Common myeloid progenitor, CD34-positive (primary cell): ENCODE measurements at regions of chr9 and their contacts with region 1.

Region 1: GRCh38 chr9:92438900-92439526 is 14.7 kb upstream of the OMD start:
- DNase-seq: peak; percentile 25 to 60 (median 51)
- H3K4me3 ChIP-seq: no peak overlapping the region
- H3K27ac ChIP-seq: no peak overlapping the region
- H3K4me1 ChIP-seq: no peaks in the 10 kb centered on the region
- H3K27me3 ChIP-seq: no peaks in the 10 kb centered on the region

Region 2: GRCh38 chr9:92119586-92119985 is 319.4 kb before region 1 on chr9:
- CTCF ChIA-PET with region 1: no interaction called
- POLR2A ChIA-PET with region 1: interaction called, 18 read pairs
- DNase-seq: no peak
- H3K4me3 ChIP-seq: peak overlapping the region in 1 of 7 experiments; percentile 27
- H3K27ac ChIP-seq: no peak overlapping the region
- H3K4me1 ChIP-seq: peaks cover 2 to 5% (median 4%) of the 10 kb centered on the region in 4 experiments
- H3K27me3 ChIP-seq: no peaks in the 10 kb centered on the region

Region 3: GRCh38 chr9:92265159-92265558 is 173.9 kb before region 1 on chr9:
- CTCF ChIA-PET with region 1: no interaction called
- POLR2A ChIA-PET with region 1: no interaction called
- DNase-seq: no peak
- H3K4me3 ChIP-seq: no peak overlapping the region
- H3K27ac ChIP-seq: no peak overlapping the region
- H3K4me1 ChIP-seq: no peaks in the 10 kb centered on the region
- H3K27me3 ChIP-seq: no peaks in the 10 kb centered on the region

Region 4: GRCh38 chr9:92328225-92328624 is 110.8 kb before region 1 on chr9:
- CTCF ChIA-PET with region 1: interaction called, 12 read pairs
- POLR2A ChIA-PET with region 1: no interaction called
- DNase-seq: peak; percentile 52 to 71 (median 68)
- H3K4me3 ChIP-seq: no peak overlapping the region
- H3K27ac ChIP-seq: no peak overlapping the region
- H3K4me1 ChIP-seq: peaks cover 14 to 32% (median 24%) of the 10 kb centered on the region in 4 experiments
- H3K27me3 ChIP-seq: no peaks in the 10 kb centered on the region

Region 5: DNA sequence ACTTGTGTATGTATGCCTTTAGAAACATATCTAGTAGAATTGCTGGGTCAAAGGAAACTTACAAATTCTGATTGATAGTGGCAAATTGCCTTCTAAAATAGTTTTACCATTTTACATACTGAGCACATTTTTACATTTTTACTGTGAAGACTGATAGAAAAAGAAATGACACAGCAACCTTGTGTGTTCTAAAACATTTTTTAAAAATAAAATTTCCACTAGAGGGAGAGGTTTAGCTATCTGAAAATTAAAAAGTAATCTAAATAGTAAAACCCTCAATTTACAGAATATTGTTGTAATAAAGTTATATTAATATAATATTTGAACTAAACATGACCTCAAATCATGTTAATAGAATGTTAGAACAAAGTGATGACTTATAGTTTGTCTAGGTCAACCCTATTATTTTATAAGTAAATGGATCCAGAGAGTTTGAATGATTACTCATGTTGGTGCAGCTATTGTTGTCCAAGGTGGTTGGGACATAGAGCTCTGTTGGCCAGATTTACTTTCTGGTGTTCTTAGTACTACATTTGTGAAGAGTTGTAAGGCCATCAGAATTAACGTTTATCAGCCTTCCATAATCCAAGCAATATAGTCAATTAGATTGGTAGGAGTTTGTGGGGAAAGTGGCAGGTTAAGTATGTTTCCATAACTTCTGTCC is 96.1 kb before region 1 on chr9:
- CTCF ChIA-PET with region 1: interaction called, 35 read pairs
- POLR2A ChIA-PET with region 1: no interaction called
- DNase-seq: peak in 2 of 3 donors; percentile 12 to 15
- H3K4me3 ChIP-seq: no peak overlapping the region
- H3K27ac ChIP-seq: no peak overlapping the region
- H3K4me1 ChIP-seq: no peaks in the 10 kb centered on the region
- H3K27me3 ChIP-seq: no peaks in the 10 kb centered on the region